SK-N-SH (cell line): ENCODE measurements at regions of chr3 and their contacts with region 1.

Region 1: DNA sequence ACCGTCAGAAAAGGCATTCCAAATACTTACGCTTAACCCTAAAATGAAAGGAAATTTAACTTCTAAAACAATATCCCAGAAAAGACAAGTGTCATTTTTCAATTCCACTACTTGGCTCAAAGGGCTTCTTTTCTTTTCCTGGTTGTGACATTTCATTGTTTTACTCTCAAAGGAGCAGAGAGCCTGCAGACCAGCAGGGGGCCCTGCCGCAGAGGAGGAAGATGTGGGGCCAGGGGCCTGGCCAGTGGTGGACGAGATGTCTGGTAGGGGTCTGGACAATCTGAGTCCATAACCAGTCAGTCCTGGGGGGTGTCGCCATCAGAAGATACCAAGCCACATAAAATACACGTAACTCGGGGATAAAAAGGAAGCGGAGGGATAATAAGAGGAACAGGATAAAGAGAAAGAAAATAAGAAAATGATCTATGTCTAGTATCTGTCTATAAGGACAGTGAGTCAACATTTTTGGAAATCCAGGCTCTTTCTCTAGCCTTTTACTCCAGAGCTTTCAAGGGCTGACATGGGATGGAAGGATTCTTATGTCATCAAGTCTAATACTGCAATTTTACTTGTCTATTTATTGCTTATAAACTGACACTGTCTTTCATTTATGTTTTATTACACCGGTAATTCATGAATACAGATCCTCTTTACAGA is 54.2 kb upstream of the ARHGEF3 start:
- DNase-seq: peak; percentile 46
- H3K4me3 ChIP-seq: no peak overlapping the region
- H3K27ac ChIP-seq: peak overlapping the region in 1 of 2 experiments; percentile 14; a peak in 1 of 4 replicates
- H3K4me1 ChIP-seq: peaks cover 6% of the 10 kb centered on the region in 2 experiments; a peak in 2 of 4 replicates
- H3K27me3 ChIP-seq: no peaks in the 10 kb centered on the region
- CTCF ChIP-seq: peak; percentile 73
- EP300 ChIP-seq: no peak
- RAD21 ChIP-seq: peak; percentile 76

Region 2: GRCh38 chr3:56629047-56629446 is 226.9 kb before region 1 on chr3:
- CTCF ChIA-PET with region 1: no interaction called
- POLR2A ChIA-PET with region 1: no interaction called
- DNase-seq: no peak
- H3K4me3 ChIP-seq: no peak overlapping the region
- H3K27ac ChIP-seq: no peak overlapping the region
- H3K4me1 ChIP-seq: no peaks in the 10 kb centered on the region
- H3K27me3 ChIP-seq: no peaks in the 10 kb centered on the region
- CTCF ChIP-seq: no peak
- EP300 ChIP-seq: no peak
- RAD21 ChIP-seq: no peak

Region 3: GRCh38 chr3:56825567-56826438 is 30.2 kb before region 1 on chr3:
- CTCF ChIA-PET with region 1: interaction called, 10 read pairs
- POLR2A ChIA-PET with region 1: no interaction called
- DNase-seq: no peak
- H3K4me3 ChIP-seq: no peak overlapping the region
- H3K27ac ChIP-seq: no peak overlapping the region
- H3K4me1 ChIP-seq: peaks cover 0 to 10% of the 10 kb centered on the region in 2 experiments; a peak in 2 of 4 replicates
- H3K27me3 ChIP-seq: no peaks in the 10 kb centered on the region
- CTCF ChIP-seq: no peak
- EP300 ChIP-seq: no peak
- RAD21 ChIP-seq: no peak